ENCODE measurements at regions of chr14 and their contacts with region 1.

Region 1: GRCh38 chr14:77326167-77326566 is 5.3 kb downstream of the GSTZ1 start:
- DNase-seq: no peak
- ATAC-seq: no peak
- H3K4me3 ChIP-seq: no peak overlapping the region
- H3K4me3 Mint-ChIP-seq: no peak overlapping the region
- H3K27ac ChIP-seq: no peak overlapping the region
- H3K27ac Mint-ChIP-seq: no peak overlapping the region
- H3K4me1 ChIP-seq: peaks cover 2 to 10% of the 10 kb centered on the region in 2 experiments
- H3K4me1 Mint-ChIP-seq: peaks cover 9 to 11% (median 11%) of the 10 kb centered on the region in 3 donors
- H3K27me3 ChIP-seq: no peaks in the 10 kb centered on the region
- H3K27me3 Mint-ChIP-seq: no peaks in the 10 kb centered on the region

Region 2: GRCh38 chr14:77467801-77468200 is 141.6 kb after region 1 on chr14:
- CTCF ChIA-PET with region 1: no interaction called
- POLR2A ChIA-PET with region 1: interaction called in 1 of 2 experiments, 11 read pairs
- DNase-seq: no peak
- ATAC-seq: no peak
- H3K4me3 ChIP-seq: no peak overlapping the region
- H3K4me3 Mint-ChIP-seq: no peak overlapping the region
- H3K27ac ChIP-seq: no peak overlapping the region
- H3K27ac Mint-ChIP-seq: no peak overlapping the region
- H3K4me1 ChIP-seq: no peaks in the 10 kb centered on the region
- H3K4me1 Mint-ChIP-seq: no peaks in the 10 kb centered on the region
- H3K27me3 ChIP-seq: no peaks in the 10 kb centered on the region
- H3K27me3 Mint-ChIP-seq: no peaks in the 10 kb centered on the region

Measured in T-cell (primary cell).